Ascending aorta (tissue), 2 donors: ENCODE measurements at regions of chr13 and their contacts with region 1.

Region 1: DNA sequence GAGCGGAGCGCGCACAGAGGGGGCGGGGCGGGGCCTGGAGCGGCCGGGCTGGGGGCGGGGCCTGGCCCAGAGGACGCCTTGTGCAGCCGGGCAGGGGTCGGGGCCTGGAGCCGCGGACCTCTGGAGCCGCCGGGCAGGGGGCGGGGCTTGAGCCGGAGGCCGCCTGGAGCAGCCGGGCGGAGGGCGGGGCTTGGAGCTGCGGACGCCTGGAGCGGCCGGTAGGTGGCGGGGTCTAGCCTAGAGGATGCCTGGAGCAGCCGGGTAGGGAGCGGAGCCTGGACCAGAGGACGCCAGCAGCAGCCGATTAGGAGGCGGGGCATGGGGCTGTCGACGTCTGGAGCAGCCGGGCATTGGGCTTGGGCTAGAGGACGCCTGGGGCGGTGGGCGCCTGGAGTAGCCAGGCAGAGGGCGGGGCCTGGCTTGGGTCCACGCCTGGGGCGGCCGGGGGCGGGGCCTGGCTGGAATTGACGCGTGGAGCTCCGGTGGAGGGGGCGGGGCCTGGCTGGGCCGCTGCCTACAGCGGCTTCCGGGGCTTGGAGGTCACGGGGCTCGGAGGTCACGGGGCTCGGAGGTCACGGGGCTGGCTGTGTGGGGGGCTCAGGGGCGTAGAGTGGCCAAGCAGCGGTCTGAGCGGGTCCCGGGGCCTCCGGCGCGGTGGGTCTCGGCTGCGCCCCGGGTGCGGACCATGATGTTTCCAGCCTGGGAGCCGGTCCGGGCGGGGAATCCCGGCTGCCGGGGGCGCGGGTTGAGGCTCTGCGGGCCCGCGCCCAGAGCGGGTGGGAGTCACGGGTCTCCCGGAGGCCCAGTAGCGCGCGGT is at the start of gene ANKRD10:
- DNase-seq: peak; percentile 99
- H3K4me3 ChIP-seq: peak within 1 kb of the TSS; percentile 90 to 92
- H3K27ac ChIP-seq: peak within 1 kb of the TSS; percentile 99 to 100
- H3K4me1 ChIP-seq: peaks cover 12 to 28% of the 10 kb centered on the region in 2 donors
- H3K27me3 ChIP-seq: no peaks in the 10 kb centered on the region
- CTCF ChIP-seq: peak; percentile 92 to 95 (median 92)
- total RNA-seq, gene ANKRD10: 100 TPM

Region 2: GRCh38 chr13:110957181-110957884 is 42.1 kb after region 1 on chr13:
- intact Hi-C with region 1: loop called (anchors 2 kb)
- DNase-seq: no peak
- H3K4me3 ChIP-seq: no peak overlapping the region
- H3K27ac ChIP-seq: no peak overlapping the region
- H3K4me1 ChIP-seq: peaks cover 0 to 5% of the 10 kb centered on the region in 2 donors
- H3K27me3 ChIP-seq: no peaks in the 10 kb centered on the region
- CTCF ChIP-seq: no peak

Region 3: DNA sequence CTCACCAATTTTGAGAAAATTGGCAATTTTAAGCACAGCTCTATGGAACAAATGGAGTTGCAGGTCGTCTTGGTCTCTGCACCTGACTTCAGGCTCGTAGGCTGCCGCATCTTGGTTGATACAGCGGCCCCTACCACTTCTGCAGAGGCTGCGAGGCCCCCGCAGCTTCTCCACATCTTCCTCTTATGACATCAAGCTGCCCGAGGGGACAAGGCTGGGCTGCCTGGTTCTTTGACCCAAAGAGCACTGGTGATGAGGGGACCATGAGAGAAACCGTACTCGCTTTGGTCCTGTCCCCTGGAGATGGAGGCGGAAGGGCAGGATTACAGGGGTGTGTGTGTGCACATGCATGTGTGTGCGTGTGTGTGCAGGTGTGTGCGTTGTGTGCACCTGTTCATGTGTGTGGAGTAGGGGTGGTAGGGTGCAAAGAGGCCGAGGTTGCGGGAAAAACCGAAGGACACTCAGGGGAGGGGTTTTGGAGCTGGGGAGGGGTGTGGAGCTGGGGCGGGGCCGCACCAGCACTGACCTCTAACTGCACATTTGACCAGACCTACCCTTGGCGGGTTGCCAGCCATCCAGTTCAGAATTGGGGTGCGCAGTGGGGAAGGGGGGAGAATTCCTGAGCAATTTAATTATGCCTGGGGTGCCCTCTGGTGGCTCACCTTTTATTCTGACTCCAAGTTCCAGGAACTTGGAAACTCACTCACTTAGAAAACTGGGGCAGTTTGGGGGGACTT is 134.7 kb after region 1 on chr13:
- intact Hi-C with region 1: loop called (anchors 2 kb)
- DNase-seq: no peak
- H3K4me3 ChIP-seq: no peak overlapping the region
- H3K27ac ChIP-seq: no peak overlapping the region
- H3K4me1 ChIP-seq: peaks cover 0 to 6% of the 10 kb centered on the region in 2 donors
- H3K27me3 ChIP-seq: no peaks in the 10 kb centered on the region
- CTCF ChIP-seq: peak; percentile 14 to 61 (median 40)

Region 4: GRCh38 chr13:111153279-111153976 is 238.2 kb after region 1 on chr13:
- intact Hi-C with region 1: loop called (anchors 2 kb)
- DNase-seq: peak; percentile 64 to 96
- H3K4me3 ChIP-seq: peak overlapping the region; percentile 66 to 89
- H3K27ac ChIP-seq: peak overlapping the region; percentile 99
- H3K4me1 ChIP-seq: peaks cover 2 to 36% of the 10 kb centered on the region in 2 donors
- H3K27me3 ChIP-seq: no peaks in the 10 kb centered on the region
- CTCF ChIP-seq: peak in 2 of 3 experiments; percentile 7 to 33

Region 5: DNA sequence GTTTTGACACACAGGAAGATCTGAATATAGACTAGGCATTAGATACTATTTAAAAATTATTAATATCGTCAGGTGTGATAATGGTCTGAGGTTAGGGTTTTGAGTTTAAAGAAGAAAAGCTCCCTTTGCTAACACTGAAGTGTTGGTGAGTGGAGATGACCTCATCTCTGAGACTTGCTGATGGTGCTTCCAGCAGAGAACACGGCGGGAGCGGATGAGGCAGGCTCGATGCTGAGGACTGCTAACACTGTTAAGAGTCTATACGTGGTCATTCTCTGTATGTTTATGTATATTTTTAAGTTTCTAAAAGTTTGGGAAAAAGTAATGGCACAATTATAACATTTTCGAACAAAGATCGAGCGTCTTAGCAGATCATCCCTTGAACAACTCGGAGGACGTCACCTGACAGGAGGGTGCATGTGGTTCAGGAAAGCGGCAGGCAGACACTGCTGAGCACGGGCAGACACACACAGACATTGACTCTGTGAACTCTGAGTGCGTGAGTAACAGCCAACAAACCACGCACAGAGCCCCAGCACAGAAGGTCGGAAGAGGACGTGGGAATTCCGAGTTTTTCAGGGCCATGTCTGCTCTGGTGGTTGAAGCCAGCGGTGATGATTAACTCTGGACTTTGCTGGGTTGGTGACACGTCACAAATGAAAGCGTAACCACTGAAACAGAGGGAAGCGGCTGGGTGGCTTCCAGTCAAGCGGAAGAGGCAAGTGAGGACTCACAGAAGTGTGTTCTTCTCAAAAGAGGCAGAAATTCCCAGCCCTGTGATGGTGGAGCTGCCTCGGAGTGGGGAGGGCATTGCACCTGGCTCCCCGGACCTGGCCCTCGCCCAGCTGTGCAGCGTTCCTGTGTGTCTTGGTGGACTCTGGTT is 313.2 kb after region 1 on chr13:
- intact Hi-C with region 1: loop called (anchors 5 kb)
- DNase-seq: peak; percentile 24 to 92
- H3K4me3 ChIP-seq: peak overlapping the region in 1 of 2 donors; percentile 18
- H3K27ac ChIP-seq: peak overlapping the region; percentile 50 to 56
- H3K4me1 ChIP-seq: peaks cover 2 to 25% of the 10 kb centered on the region in 2 donors
- H3K27me3 ChIP-seq: no peaks in the 10 kb centered on the region
- CTCF ChIP-seq: no peak